PC-9 (cell line): ENCODE measurements at regions of chr5 and their contacts with region 1.

Region 1: DNA sequence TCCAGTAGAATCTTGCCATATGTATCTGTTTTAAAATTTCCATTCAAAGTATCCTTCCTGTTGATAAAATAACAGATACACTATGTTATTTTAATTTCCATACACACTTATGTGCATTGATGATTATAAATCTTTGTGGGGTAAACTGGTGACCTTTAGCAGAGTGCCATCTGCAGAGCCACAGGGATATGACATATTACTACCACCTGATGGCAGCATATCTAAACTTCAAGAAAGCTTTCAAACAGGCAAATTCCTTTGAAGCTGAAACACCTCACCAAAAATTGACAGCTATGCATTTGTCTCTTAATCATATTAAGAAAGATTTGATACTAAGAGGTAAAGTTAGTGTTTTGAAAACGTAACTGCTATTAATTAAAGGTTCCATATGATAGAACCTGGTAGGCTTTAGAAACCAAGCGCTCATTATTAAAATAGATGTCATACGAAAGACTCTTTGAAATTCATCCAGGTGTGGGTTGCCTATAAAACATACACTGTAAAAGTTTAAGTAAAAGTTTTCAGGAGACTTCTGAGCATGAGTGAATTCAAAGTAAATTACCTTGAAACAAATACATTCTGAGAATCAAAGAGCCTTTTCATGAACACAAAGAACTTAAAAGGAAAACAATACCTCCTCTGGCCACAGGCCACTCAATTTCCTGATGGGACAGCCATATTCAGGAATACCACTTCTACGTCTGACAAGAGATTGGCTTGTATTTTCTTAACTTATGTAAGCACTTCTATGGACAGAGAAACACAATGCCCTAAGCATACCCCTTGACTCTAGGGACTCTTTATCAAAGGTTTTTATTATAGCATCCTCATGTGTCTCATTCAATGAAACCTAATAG is 93.3 kb downstream of the KIAA0825 start:
- DNase-seq: no peak
- H3K4me3 ChIP-seq: no peak overlapping the region
- H3K27ac ChIP-seq: no peak overlapping the region
- H3K4me1 ChIP-seq: no peaks in the 10 kb centered on the region
- H3K27me3 ChIP-seq: no peaks in the 10 kb centered on the region
- CTCF ChIP-seq: peak; percentile 69

Region 2: DNA sequence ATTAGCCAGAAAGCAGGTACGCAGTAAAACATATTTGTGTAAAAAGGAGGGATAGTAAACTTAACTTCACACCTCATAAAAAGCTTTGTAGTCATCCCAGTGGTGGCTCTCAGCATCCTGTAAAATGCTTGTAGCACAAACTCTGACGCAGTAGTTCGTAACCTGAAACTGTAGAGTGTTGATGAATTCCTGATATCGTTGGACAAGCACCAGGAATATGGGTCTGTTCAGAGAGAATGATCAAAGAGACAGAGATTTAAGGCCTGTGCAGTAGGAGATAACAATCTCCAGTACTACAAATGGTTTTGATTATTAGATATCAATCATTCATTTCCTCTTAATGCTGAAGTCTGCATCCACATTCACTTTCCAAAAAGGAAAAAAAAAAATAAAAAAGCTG is 55.2 kb before region 1 on chr5:
- CTCF ChIA-PET with region 1: no interaction called
- POLR2A ChIA-PET with region 1: no interaction called
- intact Hi-C with region 1: no loop called
- DNase-seq: no peak
- H3K4me3 ChIP-seq: no peak overlapping the region
- H3K27ac ChIP-seq: no peak overlapping the region
- H3K4me1 ChIP-seq: no peaks in the 10 kb centered on the region
- H3K27me3 ChIP-seq: no peaks in the 10 kb centered on the region
- CTCF ChIP-seq: no peak

Region 3: GRCh38 chr5:94908889-94909480 is 383.9 kb after region 1 on chr5:
- CTCF ChIA-PET with region 1: no interaction called
- POLR2A ChIA-PET with region 1: no interaction called
- intact Hi-C with region 1: loop called (anchors 5 kb)
- DNase-seq: no peak
- H3K4me3 ChIP-seq: no peak overlapping the region
- H3K27ac ChIP-seq: no peak overlapping the region
- H3K4me1 ChIP-seq: no peaks in the 10 kb centered on the region
- H3K27me3 ChIP-seq: no peaks in the 10 kb centered on the region
- CTCF ChIP-seq: peak; percentile 85